AG04449 (cell line): ENCODE measurements at regions of chr6 and their contacts with region 1.

Region 1: GRCh38 chr6:32796848-32797776 is 19.7 kb downstream of the HLA-DOB start:
- DNase-seq: no peak
- H3K4me3 ChIP-seq: peak overlapping the region; percentile 49
- CTCF ChIP-seq: peak; percentile 69

Region 2: GRCh38 chr6:32133786-32134185 is 663.3 kb before region 1 on chr6:
- CTCF ChIA-PET with region 1: no interaction called
- POLR2A ChIA-PET with region 1: no interaction called
- DNase-seq: no peak
- H3K4me3 ChIP-seq: no peak overlapping the region
- CTCF ChIP-seq: no peak

Region 3: GRCh38 chr6:32551410-32551809 is 245.7 kb before region 1 on chr6:
- CTCF ChIA-PET with region 1: no interaction called
- POLR2A ChIA-PET with region 1: no interaction called
- DNase-seq: no peak
- H3K4me3 ChIP-seq: no peak overlapping the region
- CTCF ChIP-seq: no peak

Region 4: GRCh38 chr6:32814145-32814544 is 17.0 kb after region 1 on chr6:
- CTCF ChIA-PET with region 1: interaction called, 13 read pairs
- POLR2A ChIA-PET with region 1: no interaction called
- DNase-seq: no peak
- H3K4me3 ChIP-seq: no peak overlapping the region
- CTCF ChIP-seq: no peak

Region 5: DNA sequence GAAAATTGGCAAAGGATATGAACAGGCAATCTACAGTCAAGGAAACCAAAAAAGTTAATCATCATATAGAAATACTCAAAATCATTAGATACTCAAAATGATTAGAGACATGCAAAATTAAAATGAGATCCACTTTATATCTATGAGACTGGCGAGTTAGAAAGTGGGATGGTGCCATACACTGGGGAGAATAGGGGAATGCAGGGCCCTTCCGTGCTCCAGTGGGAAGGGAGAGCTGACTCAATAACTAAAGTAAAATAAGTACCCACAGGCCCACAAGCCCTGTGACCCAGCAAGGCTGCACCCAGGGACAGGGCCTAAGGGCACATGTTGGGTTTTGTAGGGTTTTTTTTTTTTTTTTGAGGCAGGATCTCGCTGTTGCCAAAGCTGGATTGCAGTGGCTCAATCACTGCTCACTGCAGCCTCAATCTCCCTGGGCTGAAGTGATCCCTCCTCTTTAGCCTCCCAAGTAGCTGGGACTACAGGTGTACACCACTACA is 738.0 kb after region 1 on chr6:
- CTCF ChIA-PET with region 1: no interaction called
- POLR2A ChIA-PET with region 1: no interaction called
- DNase-seq: no peak
- H3K4me3 ChIP-seq: no peak overlapping the region
- CTCF ChIP-seq: no peak